Breast epithelium (tissue), 4 donors: ENCODE measurements at regions of chr6 and their contacts with region 1.

Region 1: GRCh38 chr6:63609231-63609630 is 26.4 kb upstream of the PHF3 start:
- DNase-seq: no peak
- H3K4me3 ChIP-seq: no peak overlapping the region
- H3K27ac ChIP-seq: no peak overlapping the region
- H3K4me1 ChIP-seq: no peaks in the 10 kb centered on the region
- H3K27me3 ChIP-seq: no peaks in the 10 kb centered on the region
- CTCF ChIP-seq: no peak
- POLR2A ChIP-seq: no peak

Region 2: GRCh38 chr6:63630466-63630865 is 21.2 kb after region 1 on chr6:
- intact Hi-C with region 1: loop called (anchors 1 kb)
- DNase-seq: no peak
- H3K4me3 ChIP-seq: no peak overlapping the region
- H3K27ac ChIP-seq: no peak overlapping the region
- H3K4me1 ChIP-seq: no peaks in the 10 kb centered on the region
- H3K27me3 ChIP-seq: no peaks in the 10 kb centered on the region
- CTCF ChIP-seq: no peak
- POLR2A ChIP-seq: no peak